ENCODE measurements at regions of chr1 and their contacts with region 1.

Region 1: GRCh38 chr1:164308101-164308500 is 250.9 kb upstream of the PBX1 start:
- DNase-seq: no peak
- ATAC-seq: no peak
- H3K4me3 ChIP-seq: no peak overlapping the region
- H3K27ac ChIP-seq: no peak overlapping the region
- H3K4me1 ChIP-seq: no peaks in the 10 kb centered on the region
- H3K27me3 ChIP-seq: no peaks in the 10 kb centered on the region
- CTCF ChIP-seq: no peak
- POLR2A ChIP-seq: no peak

Region 2: GRCh38 chr1:164265232-164265631 is 42.9 kb before region 1 on chr1:
- intact Hi-C with region 1: no loop called
- DNase-seq: no peak
- ATAC-seq: no peak
- H3K4me3 ChIP-seq: no peak overlapping the region
- H3K27ac ChIP-seq: no peak overlapping the region
- H3K4me1 ChIP-seq: no peaks in the 10 kb centered on the region
- H3K27me3 ChIP-seq: no peaks in the 10 kb centered on the region
- CTCF ChIP-seq: no peak
- POLR2A ChIP-seq: no peak

Region 3: GRCh38 chr1:164369698-164370365 is 61.7 kb after region 1 on chr1:
- intact Hi-C with region 1: loop called in 1 of 10 experiments (anchors 10 kb)
- DNase-seq: peak in 3 of 5 donors; percentile 17 to 28 (median 18)
- ATAC-seq: peak in 3 of 4 donors; percentile 53 to 77 (median 64)
- H3K4me3 ChIP-seq: no peak overlapping the region
- H3K27ac ChIP-seq: peak overlapping the region in 1 of 12 donors; percentile 1
- H3K4me1 ChIP-seq: peaks cover 0 to 6% (median 0%) of the 10 kb centered on the region in 12 donors
- H3K27me3 ChIP-seq: no peaks in the 10 kb centered on the region
- CTCF ChIP-seq: no peak
- POLR2A ChIP-seq: no peak

Measured in heart left ventricle (tissue), 16 donors.